H1 (cell line): ENCODE measurements at regions of chr12 and their contacts with region 1.

Region 1: DNA sequence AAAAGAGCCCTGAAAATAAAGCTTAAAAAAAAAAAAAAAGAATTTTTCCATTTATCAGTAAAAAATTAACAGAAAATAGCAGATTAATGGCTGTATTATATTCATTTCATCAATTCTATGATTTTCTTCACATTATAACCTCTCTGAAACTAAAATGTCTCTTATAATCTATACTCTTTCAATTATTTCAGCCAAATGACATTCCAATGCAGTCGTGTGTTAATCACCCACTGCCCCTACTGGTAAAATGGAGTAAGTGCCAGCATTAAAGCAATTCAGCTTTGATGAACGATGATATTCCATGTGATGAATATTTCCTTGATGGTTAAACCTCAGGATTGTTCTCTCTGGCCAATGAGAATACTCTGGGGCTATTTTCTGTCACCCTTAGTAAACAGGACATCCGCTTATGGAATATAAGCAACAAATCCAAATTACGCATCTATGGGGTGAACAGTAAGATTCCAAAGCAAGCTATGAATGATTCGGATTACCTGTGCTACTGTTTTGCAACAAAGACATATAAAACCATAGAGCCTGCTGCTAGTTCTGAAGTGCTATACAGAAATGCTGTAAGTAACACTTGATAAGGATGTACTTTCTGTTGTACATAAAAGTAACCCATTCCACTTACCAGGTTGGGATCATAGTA is 20.3 kb upstream of the SYCP3 start:
- DNase-seq: no peak
- H3K4me3 ChIP-seq: no peak overlapping the region
- H3K27ac ChIP-seq: no peak overlapping the region
- H3K4me1 ChIP-seq: no peaks in the 10 kb centered on the region
- H3K27me3 ChIP-seq: no peaks in the 10 kb centered on the region
- CTCF ChIP-seq: peak in 2 of 3 experiments; percentile 46 to 74; a peak in 2 of 4 replicates
- EP300 ChIP-seq: no peak
- POLR2A ChIP-seq: no peak
- RAD21 ChIP-seq: peak; percentile 67 to 70

Region 2: DNA sequence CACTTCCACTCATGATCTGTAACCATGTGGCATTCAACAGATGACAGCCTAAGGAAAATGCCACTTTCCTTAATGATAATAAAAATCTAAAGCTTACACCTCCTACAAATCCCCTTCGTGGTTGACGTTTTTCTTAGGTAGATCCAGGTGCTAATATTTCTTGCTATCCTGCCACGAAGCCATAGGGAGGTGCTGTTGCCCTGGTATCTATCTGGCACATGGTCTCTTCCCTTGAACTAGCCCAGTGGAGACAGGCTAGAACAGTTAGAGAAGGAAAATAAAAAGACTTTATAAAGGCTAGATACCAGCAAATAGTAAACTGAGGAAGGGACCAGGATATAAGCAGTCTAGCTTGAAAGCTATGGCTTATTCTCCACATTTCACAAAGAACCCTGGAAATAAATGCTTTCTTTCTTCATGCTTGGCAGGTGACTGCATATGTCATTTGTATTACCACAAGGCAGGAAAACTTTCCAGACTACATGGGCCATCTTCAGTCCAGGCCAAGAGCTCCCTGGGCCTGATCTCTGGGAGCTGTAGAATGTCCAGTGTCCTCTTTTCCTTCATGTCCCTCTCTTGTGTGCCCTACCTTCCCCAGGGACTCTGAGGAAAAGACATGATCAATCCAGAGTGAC is 269.1 kb before region 1 on chr12:
- CTCF ChIA-PET with region 1: interaction called, 15 read pairs
- POLR2A ChIA-PET with region 1: no interaction called
- DNase-seq: peak; percentile 31 to 47
- H3K4me3 ChIP-seq: no peak overlapping the region
- H3K27ac ChIP-seq: no peak overlapping the region
- H3K4me1 ChIP-seq: no peaks in the 10 kb centered on the region
- H3K27me3 ChIP-seq: no peaks in the 10 kb centered on the region
- CTCF ChIP-seq: peak; percentile 32 to 82 (median 80)
- EP300 ChIP-seq: no peak
- POLR2A ChIP-seq: no peak
- RAD21 ChIP-seq: peak; percentile 92 to 93

Region 3: GRCh38 chr12:101694297-101694848 is 65.1 kb before region 1 on chr12:
- CTCF ChIA-PET with region 1: no interaction called
- POLR2A ChIA-PET with region 1: no interaction called
- DNase-seq: no peak
- H3K4me3 ChIP-seq: no peak overlapping the region
- H3K27ac ChIP-seq: no peak overlapping the region
- H3K4me1 ChIP-seq: peaks cover 0 to 4% (median 3%) of the 10 kb centered on the region in 4 experiments; a peak in 3 of 7 replicates
- H3K27me3 ChIP-seq: peaks cover 2 to 18% (median 12%) of the 10 kb centered on the region in 4 experiments
- CTCF ChIP-seq: no peak
- EP300 ChIP-seq: no peak
- POLR2A ChIP-seq: no peak
- RAD21 ChIP-seq: no peak

Region 4: DNA sequence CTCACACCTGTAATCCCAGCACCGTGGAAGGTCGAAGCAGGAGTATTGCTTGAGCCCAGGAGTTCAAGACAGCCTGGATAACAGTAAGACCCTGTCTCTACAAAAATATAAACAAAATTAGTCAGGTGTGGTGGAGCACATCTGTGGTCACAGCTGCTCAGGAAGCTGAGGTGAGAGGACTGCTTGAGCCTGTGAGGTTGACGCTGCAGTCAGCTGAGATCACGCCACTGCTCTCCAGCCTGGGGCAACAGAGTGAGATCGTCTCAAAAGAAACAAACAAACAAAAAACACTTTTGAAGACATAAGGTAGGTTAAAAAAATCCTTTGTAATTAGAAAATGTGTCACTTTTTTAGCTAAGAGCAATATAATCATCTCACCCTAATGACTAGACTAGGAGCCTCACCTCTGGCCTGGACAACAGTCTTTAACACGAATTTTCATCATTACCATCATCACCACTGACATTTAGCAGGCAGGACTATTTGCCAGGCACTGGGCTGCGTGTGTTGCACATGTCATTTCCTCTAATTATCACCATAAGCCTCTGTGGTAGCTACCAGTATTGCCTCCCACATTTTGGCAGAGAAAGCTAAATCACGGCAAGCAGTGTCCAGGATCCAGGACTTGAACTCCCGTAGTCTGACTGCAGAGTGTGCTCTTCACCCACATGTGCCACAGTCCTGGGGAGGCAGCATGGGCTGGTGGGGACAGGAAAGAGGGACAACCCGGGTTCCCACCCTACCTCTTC is 15.6 kb before region 1 on chr12:
- CTCF ChIA-PET with region 1: interaction called, 13 read pairs
- POLR2A ChIA-PET with region 1: interaction called, 4 read pairs
- DNase-seq: no peak
- H3K4me3 ChIP-seq: no peak overlapping the region
- H3K27ac ChIP-seq: no peak overlapping the region
- H3K4me1 ChIP-seq: no peaks in the 10 kb centered on the region
- H3K27me3 ChIP-seq: no peaks in the 10 kb centered on the region
- CTCF ChIP-seq: peak in 1 of 3 experiments; percentile 13; a peak in 1 of 4 replicates
- EP300 ChIP-seq: no peak
- POLR2A ChIP-seq: no peak
- RAD21 ChIP-seq: peak; percentile 28 to 33; a peak in 1 of 4 replicates

Region 5: GRCh38 chr12:101773650-101774162 is 14.2 kb after region 1 on chr12:
- CTCF ChIA-PET with region 1: interaction called, 38 read pairs
- POLR2A ChIA-PET with region 1: no interaction called
- DNase-seq: peak; percentile 5 to 64
- H3K4me3 ChIP-seq: no peak overlapping the region
- H3K27ac ChIP-seq: no peak overlapping the region
- H3K4me1 ChIP-seq: no peaks in the 10 kb centered on the region
- H3K27me3 ChIP-seq: no peaks in the 10 kb centered on the region
- CTCF ChIP-seq: peak; percentile 34 to 80 (median 79)
- EP300 ChIP-seq: no peak
- POLR2A ChIP-seq: no peak
- RAD21 ChIP-seq: peak; percentile 94 to 95

Region 6: GRCh38 chr12:101830367-101831325 is 71.1 kb after region 1 on chr12 and contains the start of gene GNPTAB:
- CTCF ChIA-PET with region 1: interaction called, 25 read pairs
- POLR2A ChIA-PET with region 1: interaction called, 3 read pairs
- DNase-seq: peak; percentile 76 to 95
- H3K4me3 ChIP-seq: peak within 1 kb of the TSS; percentile 83 to 96 (median 90)
- H3K27ac ChIP-seq: no peak within 1 kb of the TSS; the same call in 1 of the 2 replicates
- H3K4me1 ChIP-seq: peaks cover 0 to 17% (median 5%) of the 10 kb centered on the region in 4 experiments; a peak in 3 of 7 replicates
- H3K27me3 ChIP-seq: no peaks in the 10 kb centered on the region
- CTCF ChIP-seq: peak; percentile 72 to 76 (median 74)
- EP300 ChIP-seq: 0 out of 3 replicates have a peak, but pooled peaks of 1 of the 2 experiments have one; percentile 47
- POLR2A ChIP-seq: no peak; a peak in 1 of 3 replicates
- RAD21 ChIP-seq: peak; percentile 59 to 63
- total RNA-seq, gene GNPTAB: 51.3 and 54.6 TPM in 2 replicates